Activated naive CD4-positive, alpha-beta T cell treated with anti-CD3 and anti-CD28 coated beads for 36 hours (primary cell): ENCODE measurements at regions of chr18 and their contacts with region 1.

Region 1: GRCh38 chr18:62224229-62224628 is 37.2 kb downstream of the RELCH start:
- DNase-seq: no peak
- H3K4me3 Mint-ChIP-seq: no peak overlapping the region
- H3K27ac Mint-ChIP-seq: no peak overlapping the region
- H3K4me1 Mint-ChIP-seq: peaks cover 5% of the 10 kb centered on the region
- H3K27me3 Mint-ChIP-seq: no peaks in the 10 kb centered on the region

Region 2: DNA sequence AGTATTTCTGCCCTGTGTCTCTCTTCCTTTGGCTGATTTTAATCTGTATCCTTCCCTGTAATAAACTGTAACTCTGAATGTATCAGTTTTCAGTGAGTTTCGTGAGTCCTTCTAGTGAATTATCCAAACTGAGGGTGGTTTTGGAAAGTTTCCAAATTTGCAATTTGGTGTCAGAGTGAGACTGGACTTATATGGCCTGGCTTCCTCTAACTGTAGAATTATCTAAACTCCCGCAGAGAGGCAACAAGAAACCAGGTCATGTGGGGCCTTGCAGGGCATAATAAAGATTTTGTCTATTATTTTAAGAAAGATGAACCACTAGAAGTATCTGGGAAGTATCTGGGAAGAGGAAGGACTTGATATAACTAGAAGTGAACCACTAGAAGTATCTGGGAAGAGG is 236.1 kb before region 1 on chr18:
- CTCF ChIA-PET with region 1: no interaction called
- intact Hi-C with region 1: no loop called
- DNase-seq: no peak
- H3K4me3 Mint-ChIP-seq: no peak overlapping the region
- H3K27ac Mint-ChIP-seq: no peak overlapping the region
- H3K4me1 Mint-ChIP-seq: peaks cover 6% of the 10 kb centered on the region
- H3K27me3 Mint-ChIP-seq: no peaks in the 10 kb centered on the region

Region 3: DNA sequence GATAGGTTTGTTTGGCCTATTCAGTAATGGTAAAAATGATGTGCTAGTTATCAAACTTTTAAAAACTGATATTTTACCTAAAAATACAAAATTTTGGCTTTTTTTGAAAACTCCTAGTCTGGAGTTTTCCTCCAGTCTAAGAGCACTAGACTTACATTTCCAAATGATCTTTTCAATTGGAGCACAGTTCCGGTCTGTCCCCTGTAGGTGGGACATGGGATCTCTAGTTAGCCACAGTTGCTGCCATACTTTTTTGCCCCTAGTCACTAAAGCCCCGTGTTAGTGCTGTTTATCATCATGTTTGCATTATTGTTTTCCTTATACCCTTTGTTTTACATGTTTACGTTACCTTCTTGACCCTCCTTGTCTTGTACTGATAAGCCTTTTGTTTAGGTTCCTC is 15.2 kb after region 1 on chr18:
- CTCF ChIA-PET with region 1: interaction called, 3 read pairs
- intact Hi-C with region 1: loop called (anchors 2 kb)
- DNase-seq: no peak
- H3K4me3 Mint-ChIP-seq: no peak overlapping the region
- H3K27ac Mint-ChIP-seq: no peak overlapping the region
- H3K4me1 Mint-ChIP-seq: peaks cover 3% of the 10 kb centered on the region
- H3K27me3 Mint-ChIP-seq: no peaks in the 10 kb centered on the region

Region 4: DNA sequence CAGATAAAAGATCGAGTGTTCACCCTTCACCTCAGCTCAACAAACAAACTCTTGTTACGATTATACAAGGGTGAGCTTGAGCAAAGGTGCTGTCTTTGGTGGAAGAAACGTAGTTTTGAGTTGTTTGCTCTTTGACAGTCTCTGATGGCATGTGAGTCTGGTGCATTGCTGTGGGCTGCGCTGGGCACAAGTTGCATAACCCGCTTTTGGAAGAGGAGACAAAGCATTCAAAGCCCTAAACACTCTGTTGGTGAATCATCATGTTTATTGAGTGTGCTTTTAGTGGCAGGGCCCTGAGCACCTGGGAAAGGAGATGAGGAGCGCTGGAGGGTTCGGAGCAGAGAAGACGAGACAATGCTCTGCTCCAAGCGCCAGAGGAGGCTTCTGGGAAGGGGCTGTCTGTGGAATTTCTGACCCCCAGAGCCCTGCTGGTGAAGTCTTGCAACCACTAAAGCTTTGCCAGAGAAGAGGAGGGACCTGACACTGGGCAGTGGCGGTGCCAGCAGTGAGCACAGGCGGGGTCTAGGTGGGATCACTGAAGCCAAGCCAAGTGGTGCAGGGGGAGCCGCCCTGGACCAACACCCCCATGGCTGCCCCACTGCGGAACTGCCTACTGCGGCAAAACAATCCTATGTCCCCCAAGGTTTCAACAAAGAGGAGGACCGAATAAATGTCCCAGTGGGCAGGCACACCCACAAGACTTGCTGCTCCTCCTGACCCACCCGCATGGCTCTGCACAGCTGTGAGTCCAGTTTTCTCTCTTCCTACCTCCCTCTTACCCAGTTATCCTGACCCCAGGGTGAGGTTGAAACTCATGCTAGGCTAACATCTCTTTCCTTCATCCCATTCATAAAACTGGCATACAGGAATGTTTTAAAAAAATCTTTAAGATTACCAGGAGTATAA is 164.9 kb after region 1 on chr18:
- CTCF ChIA-PET with region 1: no interaction called
- intact Hi-C with region 1: no loop called
- DNase-seq: no peak
- H3K4me3 Mint-ChIP-seq: no peak overlapping the region
- H3K27ac Mint-ChIP-seq: no peak overlapping the region
- H3K4me1 Mint-ChIP-seq: no peaks in the 10 kb centered on the region
- H3K27me3 Mint-ChIP-seq: no peaks in the 10 kb centered on the region